Activated CD8-positive, alpha-beta T cell treated with anti-CD3 and anti-CD28 coated beads, Interleukin-2, amount 10 ng/mL, durations not matched to agents 7 days and 5 days (primary cell): ENCODE measurements at regions of chr1 and their contacts with region 1.

Region 1: DNA sequence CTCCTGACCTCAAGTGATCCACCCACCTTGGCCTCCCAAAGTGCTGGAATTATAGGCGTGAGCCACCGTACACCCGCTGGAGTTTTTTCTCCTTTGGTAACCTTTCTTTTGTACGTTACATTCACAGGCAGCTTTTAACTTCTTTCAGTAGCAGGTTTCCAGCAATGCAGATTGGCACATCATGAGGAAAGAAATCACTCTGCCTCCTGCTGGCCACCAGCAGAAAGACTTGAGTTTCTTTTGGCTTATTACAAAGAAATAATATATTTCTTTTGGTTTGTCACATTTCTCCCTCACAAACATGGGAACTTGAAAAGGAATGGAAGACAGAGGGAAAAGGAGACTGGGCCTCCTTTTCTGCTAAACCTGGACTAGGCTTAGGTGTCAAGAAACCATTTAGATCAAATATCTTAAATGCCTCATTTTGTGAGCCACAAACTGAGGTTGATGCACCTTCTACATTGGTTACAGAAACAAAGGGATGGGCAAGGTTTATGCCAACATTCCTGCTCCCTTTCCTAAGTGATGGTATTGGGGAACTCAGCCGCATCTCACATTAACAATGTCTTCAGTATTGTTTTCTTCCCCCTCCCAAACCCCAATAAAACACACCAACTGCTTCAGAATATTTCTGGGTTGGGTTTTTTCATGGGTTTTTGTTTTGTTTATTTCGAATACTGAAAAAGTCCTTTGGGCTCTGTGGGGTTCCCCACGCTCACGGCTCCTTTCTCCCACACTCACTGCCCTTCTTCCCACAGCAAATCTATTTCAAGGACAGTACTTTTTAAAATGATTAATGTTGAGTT is 7.7 kb downstream of the ENSA start:
- DNase-seq: peak; percentile 72
- ATAC-seq: peak; percentile 37
- H3K4me3 Mint-ChIP-seq: no peak overlapping the region
- H3K27ac Mint-ChIP-seq: peak overlapping the region; percentile 80
- H3K4me1 Mint-ChIP-seq: peaks cover 46% of the 10 kb centered on the region
- H3K27me3 Mint-ChIP-seq: no peaks in the 10 kb centered on the region

Region 2: GRCh38 chr1:150567717-150568593 is 53.7 kb before region 1 on chr1:
- CTCF ChIA-PET with region 1: interaction called, 386 read pairs
- POLR2A ChIA-PET with region 1: interaction called, 224 read pairs
- DNase-seq: peak; percentile 73
- ATAC-seq: peak; percentile 10
- H3K4me3 Mint-ChIP-seq: peak overlapping the region; percentile 72
- H3K27ac Mint-ChIP-seq: peak overlapping the region; percentile 95
- H3K4me1 Mint-ChIP-seq: peaks cover 97% of the 10 kb centered on the region
- H3K27me3 Mint-ChIP-seq: no peaks in the 10 kb centered on the region